ENCODE measurements at regions of chr9 and their contacts with region 1.

Region 1: DNA sequence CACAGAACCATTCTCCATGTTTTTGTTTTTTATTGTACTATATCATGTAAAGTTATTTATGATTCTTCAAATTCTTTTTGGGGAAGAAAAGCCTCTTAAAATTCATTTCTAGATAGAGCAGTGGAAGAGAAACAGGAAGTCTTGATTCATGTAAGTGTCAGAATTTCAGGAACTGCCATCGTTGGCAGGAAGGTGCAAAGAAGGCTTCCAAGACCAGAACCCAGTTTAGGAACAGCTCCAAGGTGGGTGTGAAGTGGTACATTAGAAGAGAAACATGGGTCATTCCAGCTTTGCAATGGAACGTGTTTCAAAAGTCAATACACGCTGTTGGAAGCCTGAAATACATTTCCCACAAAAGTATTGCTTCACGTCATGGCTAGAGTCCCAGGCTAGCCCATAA is 14.8 kb downstream of the SAXO1 start:
- DNase-seq: no peak
- H3K4me3 ChIP-seq: no peak overlapping the region
- H3K27ac ChIP-seq: no peak overlapping the region
- H3K4me1 ChIP-seq: no peaks in the 10 kb centered on the region
- H3K27me3 ChIP-seq: no peaks in the 10 kb centered on the region
- CTCF ChIP-seq: no peak
- POLR2A ChIP-seq: no peak

Region 2: GRCh38 chr9:18255158-18255629 is 763.0 kb before region 1 on chr9:
- intact Hi-C with region 1: loop called (anchors 5 kb)
- DNase-seq: peak; percentile 64
- H3K4me3 ChIP-seq: no peak overlapping the region
- H3K27ac ChIP-seq: no peak overlapping the region
- H3K4me1 ChIP-seq: peaks cover under 1% of the 10 kb centered on the region
- H3K27me3 ChIP-seq: no peaks in the 10 kb centered on the region
- CTCF ChIP-seq: peak; percentile 87 to 96 (median 88)
- POLR2A ChIP-seq: no peak

Region 3: DNA sequence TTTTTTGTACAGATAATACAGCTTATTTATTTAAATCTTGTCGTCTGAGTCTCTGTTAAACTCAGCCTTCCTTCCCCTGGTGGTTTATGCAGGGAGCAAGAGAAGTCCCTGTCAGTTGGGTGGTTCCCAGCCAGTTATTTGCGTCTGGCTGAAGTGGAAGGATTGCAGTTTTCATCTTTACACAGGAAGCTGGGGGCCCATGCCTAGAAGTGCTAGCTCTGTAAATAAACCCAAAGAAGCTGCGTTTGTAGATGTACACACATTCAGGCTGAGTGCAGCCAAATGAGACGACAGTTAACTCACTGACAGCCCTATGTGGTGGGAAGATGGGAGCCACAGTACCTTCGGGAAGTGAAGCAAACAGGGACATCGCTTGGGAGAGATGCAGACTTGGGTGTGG is 107.3 kb before region 1 on chr9:
- intact Hi-C with region 1: no loop called
- DNase-seq: no peak
- H3K4me3 ChIP-seq: no peak overlapping the region
- H3K27ac ChIP-seq: no peak overlapping the region
- H3K4me1 ChIP-seq: no peaks in the 10 kb centered on the region
- H3K27me3 ChIP-seq: no peaks in the 10 kb centered on the region
- CTCF ChIP-seq: no peak
- POLR2A ChIP-seq: no peak

Measured in prostate gland (tissue), 2 donors.